OCI-LY7 (cell line): ENCODE measurements at regions of chr9 and their contacts with region 1.

Region 1: DNA sequence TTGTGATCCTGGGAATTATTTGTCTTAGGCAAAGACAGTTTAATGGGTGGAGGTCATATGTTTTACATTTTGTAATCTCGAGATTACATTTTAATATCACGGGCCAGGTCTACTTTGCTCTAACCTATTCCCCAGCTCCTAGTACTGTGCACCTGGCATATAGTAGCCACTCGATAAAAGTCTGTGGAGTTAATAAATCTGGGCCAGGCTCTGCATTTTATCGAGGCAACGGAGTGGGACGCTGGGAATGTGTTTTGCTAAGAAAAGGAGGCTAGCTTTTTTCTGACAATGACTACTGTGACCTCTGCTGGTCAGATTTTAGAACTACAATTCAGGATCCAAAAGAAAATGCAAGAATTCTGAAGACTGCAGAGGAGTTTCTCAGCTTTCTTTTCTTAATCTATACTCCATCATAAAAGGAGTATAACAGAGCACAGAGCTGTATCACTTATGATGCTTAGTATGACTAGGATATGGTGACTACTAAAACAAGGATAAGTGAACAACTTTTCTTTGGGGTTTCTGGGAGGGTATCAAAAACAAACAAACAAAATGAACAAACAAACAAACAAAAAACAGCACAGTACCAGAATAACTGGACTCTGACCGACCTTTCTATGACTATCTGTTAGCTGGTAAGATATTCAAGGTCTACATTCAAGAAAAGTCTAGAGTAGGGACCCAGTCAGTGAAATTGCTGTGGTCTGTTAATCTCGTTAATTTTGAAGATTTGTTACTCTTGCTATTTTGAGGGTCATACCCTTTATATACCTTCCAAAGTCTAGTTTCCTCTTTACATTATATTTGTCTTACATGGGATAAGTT is 46.1 kb upstream of the CER1 start:
- DNase-seq: peak; percentile 52
- H3K4me3 ChIP-seq: no peak overlapping the region
- H3K27ac ChIP-seq: no peak overlapping the region
- H3K4me1 ChIP-seq: no peaks in the 10 kb centered on the region
- CTCF ChIP-seq: peak; percentile 87

Region 2: GRCh38 chr9:14466429-14466818 is 302.2 kb before region 1 on chr9:
- CTCF ChIA-PET with region 1: no interaction called
- POLR2A ChIA-PET with region 1: no interaction called
- intact Hi-C with region 1: loop called (anchors 2 kb)
- DNase-seq: no peak
- H3K4me3 ChIP-seq: no peak overlapping the region
- H3K27ac ChIP-seq: no peak overlapping the region
- H3K4me1 ChIP-seq: no peaks in the 10 kb centered on the region
- CTCF ChIP-seq: no peak

Region 3: DNA sequence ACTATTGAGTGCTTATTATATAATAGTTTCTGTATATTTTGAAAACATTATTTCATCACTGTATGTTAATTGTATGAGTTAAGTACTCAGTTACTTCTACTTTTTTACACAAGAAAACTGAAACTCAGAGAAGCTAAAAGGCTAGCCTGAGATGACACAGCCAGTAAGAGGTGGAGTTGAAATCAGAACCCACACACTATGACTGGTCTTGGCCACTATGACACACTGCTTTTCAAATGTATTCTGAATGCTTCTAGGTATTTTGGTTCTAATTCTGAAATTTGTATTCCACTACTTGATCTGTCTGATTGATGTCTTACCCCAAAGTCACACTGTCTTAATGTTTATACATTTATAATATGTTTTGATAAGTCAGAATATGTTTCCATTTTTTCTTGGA is 257.2 kb before region 1 on chr9:
- CTCF ChIA-PET with region 1: no interaction called
- POLR2A ChIA-PET with region 1: no interaction called
- intact Hi-C with region 1: no loop called
- DNase-seq: no peak
- H3K4me3 ChIP-seq: no peak overlapping the region
- H3K27ac ChIP-seq: no peak overlapping the region
- H3K4me1 ChIP-seq: no peaks in the 10 kb centered on the region
- CTCF ChIP-seq: no peak